ENCODE measurements at regions of chr4 and their contacts with region 1.

Region 1: GRCh38 chr4:16264798-16265197 is 38.5 kb upstream of the TAPT1 start:
- DNase-seq: peak; percentile 24
- H3K4me3 ChIP-seq: no peak overlapping the region
- H3K27ac ChIP-seq: no peak overlapping the region
- H3K4me1 ChIP-seq: peaks cover 13% of the 10 kb centered on the region
- H3K27me3 ChIP-seq: no peaks in the 10 kb centered on the region
- CTCF ChIP-seq: peak; percentile 55

Region 2: DNA sequence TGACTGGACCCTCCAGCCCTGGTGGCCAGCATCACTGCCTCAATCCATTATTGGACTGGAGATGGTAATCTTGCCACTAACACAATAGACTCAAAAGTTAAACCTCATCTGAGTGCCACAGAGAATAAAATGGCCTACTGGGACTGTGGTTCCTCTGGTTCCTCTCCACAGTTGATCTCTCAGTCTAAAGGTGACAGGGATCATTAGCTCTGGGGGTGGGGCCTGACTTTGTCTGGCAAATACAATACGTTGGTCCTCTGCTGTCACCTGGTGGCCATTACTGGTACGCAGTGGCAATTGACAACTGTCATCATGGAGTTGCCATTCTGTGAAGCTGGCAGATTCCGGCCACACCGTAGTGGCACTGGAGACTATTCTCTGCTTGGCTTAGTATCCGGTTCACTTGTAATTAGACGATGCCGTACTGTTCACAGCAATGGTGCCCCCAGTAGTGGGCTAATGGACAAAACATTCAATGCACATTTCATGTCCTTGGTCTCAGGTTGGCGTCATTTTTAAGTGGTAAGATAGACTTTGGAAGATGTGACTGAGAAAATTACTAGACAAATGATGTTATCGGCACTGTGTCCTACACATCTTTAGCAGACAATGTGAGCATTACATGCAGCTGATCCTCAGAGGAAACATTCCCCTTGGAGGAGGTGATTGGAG is 308.5 kb before region 1 on chr4:
- CTCF ChIA-PET with region 1: no interaction called
- dilution Hi-C with region 1: no loop called
- in situ Hi-C with region 1: no loop called
- intact Hi-C with region 1: loop called (anchors 2 kb)
- DNase-seq: peak; percentile 68
- H3K4me3 ChIP-seq: no peak overlapping the region
- H3K27ac ChIP-seq: no peak overlapping the region
- H3K4me1 ChIP-seq: peaks cover 5% of the 10 kb centered on the region
- H3K27me3 ChIP-seq: no peaks in the 10 kb centered on the region
- CTCF ChIP-seq: peak; percentile 99 to 100

Region 3: GRCh38 chr4:16026160-16026761 is 238.5 kb before region 1 on chr4:
- CTCF ChIA-PET with region 1: no interaction called
- dilution Hi-C with region 1: no loop called
- in situ Hi-C with region 1: loop called in 1 of 2 experiments (anchors 10 kb)
- intact Hi-C with region 1: loop called (anchors 1 kb)
- DNase-seq: peak; percentile 32
- H3K4me3 ChIP-seq: no peak overlapping the region
- H3K27ac ChIP-seq: no peak overlapping the region
- H3K4me1 ChIP-seq: peaks cover 4% of the 10 kb centered on the region
- H3K27me3 ChIP-seq: no peaks in the 10 kb centered on the region
- CTCF ChIP-seq: peak; percentile 75 to 76

Region 4: DNA sequence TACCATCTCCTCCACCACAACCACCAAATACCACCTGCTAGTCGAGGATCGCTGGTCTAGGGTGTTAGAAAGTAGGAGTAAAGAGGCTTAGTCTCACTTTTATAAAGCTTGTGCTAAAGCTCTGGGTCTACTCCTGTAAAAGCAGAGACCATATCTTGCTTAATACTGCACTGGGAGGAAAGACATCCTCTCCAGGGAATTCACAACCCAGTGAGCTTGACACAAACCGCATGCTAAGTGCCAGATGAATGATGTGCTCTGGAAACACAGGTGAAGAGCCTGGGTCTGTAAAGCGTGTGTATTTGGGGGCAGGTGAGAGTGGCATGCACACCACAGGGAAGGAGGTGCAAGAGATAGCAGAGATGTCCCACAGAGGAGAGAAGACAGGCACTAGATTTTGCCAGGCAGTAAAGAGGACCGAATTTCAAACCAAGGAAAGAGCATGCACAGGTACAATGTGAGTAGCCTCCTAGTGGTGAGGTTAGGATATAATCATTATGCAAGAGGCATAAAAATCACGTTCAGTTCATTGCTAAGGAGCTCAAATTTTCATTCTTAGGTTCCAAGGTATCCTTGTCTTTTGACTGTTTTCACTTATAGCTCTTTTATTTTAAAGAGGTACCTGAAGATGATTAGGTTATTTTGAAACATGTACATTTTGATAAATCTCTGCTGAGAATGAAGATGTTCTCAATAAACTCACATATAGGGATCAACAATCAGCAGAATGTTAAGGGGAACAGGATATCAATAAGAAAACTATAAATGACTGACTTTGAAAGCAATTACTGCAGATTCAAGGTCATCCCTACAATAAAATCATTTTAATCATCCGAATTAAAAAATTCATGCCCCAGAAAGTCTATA is 59.3 kb before region 1 on chr4:
- CTCF ChIA-PET with region 1: interaction called, 12 read pairs
- dilution Hi-C with region 1: no loop called
- in situ Hi-C with region 1: no loop called
- intact Hi-C with region 1: no loop called
- DNase-seq: no peak
- H3K4me3 ChIP-seq: no peak overlapping the region
- H3K27ac ChIP-seq: no peak overlapping the region
- H3K4me1 ChIP-seq: no peaks in the 10 kb centered on the region
- H3K27me3 ChIP-seq: no peaks in the 10 kb centered on the region
- CTCF ChIP-seq: peak; percentile 76 to 83

Measured in mammary epithelial cell (primary cell).